Mammary epithelial cell (primary cell): ENCODE measurements at regions of chr4 and their contacts with region 1.

Region 1: GRCh38 chr4:144754562-144755410 is 108.8 kb downstream of the HHIP start:
- DNase-seq: peak; percentile 43
- H3K4me3 ChIP-seq: no peak overlapping the region
- H3K27ac ChIP-seq: no peak overlapping the region
- H3K4me1 ChIP-seq: peaks cover 5% of the 10 kb centered on the region
- H3K27me3 ChIP-seq: no peaks in the 10 kb centered on the region
- CTCF ChIP-seq: peak; percentile 78 to 81

Region 2: DNA sequence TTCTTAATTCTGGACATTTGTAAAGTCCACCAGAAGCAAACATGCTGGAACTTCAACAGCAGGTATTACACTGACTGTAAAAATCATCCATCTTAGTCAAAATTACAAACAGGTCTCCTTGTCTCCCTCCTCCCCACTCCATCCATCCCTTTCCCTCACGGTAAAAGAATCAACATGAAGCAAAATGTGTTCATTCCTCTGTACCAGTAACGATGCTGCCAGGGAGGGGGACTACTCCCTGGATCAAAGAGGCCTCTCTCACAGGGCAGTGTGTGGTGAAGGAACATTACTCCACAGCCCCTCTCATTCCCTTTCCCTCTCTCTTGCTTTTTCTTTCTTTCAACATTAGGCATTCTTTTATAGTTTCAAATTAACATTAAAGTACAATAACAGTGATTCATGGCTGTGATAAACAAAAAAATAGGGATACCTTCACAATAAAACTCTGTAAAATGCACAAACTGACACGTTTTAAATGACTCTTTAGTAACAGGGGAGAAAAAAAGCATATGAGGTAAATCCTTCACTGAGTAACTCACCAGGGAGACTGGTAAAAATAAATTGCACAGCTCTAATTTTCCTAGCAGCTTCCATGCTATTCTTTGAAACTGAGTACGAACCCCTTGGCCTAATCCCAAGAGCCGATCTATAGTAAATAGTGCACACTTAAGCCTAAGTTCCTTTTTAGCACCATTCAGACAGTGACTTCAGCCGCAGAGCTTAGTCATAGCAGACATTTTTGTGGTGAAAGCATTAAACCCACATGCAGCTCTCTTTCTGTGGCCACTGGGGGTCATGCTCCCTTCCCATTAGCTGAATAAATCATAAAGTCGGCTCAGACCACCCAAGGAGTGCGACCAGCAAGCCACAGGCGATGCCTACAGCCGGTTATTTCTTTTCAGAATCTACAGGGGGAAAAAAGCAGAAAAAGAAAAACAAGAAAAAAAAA is 398.7 kb before region 1 on chr4:
- CTCF ChIA-PET with region 1: no interaction called
- dilution Hi-C with region 1: no loop called
- in situ Hi-C with region 1: no loop called
- intact Hi-C with region 1: loop called (anchors 10 kb)
- DNase-seq: peak; percentile 86
- H3K4me3 ChIP-seq: no peak overlapping the region
- H3K27ac ChIP-seq: no peak overlapping the region
- H3K4me1 ChIP-seq: peaks cover 30% of the 10 kb centered on the region
- H3K27me3 ChIP-seq: no peaks in the 10 kb centered on the region
- CTCF ChIP-seq: peak; percentile 27 to 46

Region 3: DNA sequence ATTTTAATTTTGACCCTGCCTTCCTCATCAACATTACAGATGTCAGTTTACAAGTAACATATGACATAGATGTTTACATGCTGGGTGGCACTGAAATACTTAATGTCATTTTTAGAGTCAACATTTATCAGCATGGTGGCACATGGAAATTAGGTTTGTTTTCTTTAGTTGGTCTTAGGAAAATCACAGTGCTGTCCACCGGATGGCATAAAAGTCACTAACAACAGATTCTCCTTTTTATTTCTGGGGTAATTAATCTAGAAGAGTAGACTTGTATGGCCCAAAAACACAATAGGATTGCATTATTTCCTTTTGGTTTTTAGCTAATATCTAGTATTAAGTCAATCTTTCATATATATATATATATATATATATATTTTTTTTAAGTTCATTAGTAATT is 197.4 kb before region 1 on chr4:
- CTCF ChIA-PET with region 1: no interaction called
- dilution Hi-C with region 1: no loop called
- in situ Hi-C with region 1: no loop called
- intact Hi-C with region 1: loop called (anchors 1 kb)
- DNase-seq: no peak
- H3K4me3 ChIP-seq: no peak overlapping the region
- H3K27ac ChIP-seq: no peak overlapping the region
- H3K4me1 ChIP-seq: no peaks in the 10 kb centered on the region
- H3K27me3 ChIP-seq: no peaks in the 10 kb centered on the region
- CTCF ChIP-seq: peak in 1 of 2 donors; percentile 16

Region 4: GRCh38 chr4:144611846-144612245 is 142.9 kb before region 1 on chr4:
- CTCF ChIA-PET with region 1: no interaction called
- dilution Hi-C with region 1: no loop called
- in situ Hi-C with region 1: no loop called
- intact Hi-C with region 1: loop called (anchors 1 kb)
- DNase-seq: peak; percentile 22
- H3K4me3 ChIP-seq: no peak overlapping the region
- H3K27ac ChIP-seq: no peak overlapping the region
- H3K4me1 ChIP-seq: no peaks in the 10 kb centered on the region
- H3K27me3 ChIP-seq: no peaks in the 10 kb centered on the region
- CTCF ChIP-seq: peak; percentile 62 to 78

Region 5: DNA sequence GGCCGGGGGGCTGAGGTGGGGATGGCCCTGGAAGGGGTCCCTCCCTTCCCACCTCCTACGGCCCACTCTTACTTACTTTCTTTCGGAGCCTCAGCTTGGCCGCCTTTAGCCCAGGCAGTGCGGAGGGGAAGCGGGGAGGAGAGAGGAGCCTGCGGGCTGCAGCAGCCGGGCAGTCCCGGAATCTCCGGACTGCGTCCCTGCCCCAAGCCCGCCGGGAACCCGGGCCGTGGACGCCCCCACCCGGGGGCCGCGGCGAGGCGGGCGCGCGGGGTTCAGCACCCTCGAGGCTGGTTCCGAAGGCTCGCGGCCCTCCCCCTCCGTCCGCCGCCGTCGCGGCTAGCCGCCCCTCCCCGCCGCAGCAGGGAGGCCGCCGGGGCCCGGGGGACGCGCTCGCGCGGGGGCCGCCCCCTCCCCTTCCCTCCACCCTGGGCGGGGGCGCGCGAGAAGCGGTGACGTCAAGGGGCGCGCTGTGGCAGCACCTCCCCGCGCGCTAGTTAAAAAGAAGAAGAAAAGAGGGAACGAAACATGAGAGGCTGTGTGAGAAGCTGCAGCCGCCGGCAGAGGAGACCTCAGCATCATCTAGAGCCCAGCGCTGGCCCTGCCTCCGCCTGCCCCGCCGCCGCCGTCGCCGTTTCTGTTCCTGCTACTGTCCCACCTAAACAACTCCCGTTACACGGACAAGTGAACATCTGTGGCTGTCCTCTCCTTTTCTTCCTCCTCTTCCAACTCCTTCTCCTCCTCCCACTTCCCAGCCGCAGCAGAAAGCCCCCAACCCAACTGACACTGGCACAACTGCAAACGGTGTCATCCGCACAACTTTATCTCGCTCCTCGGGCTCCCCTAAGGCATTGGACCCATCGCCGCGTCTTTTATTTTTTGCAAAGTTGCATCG is 108.9 kb before region 1 on chr4 and contains the start of gene HHIP:
- CTCF ChIA-PET with region 1: no interaction called
- dilution Hi-C with region 1: no loop called
- in situ Hi-C with region 1: no loop called
- intact Hi-C with region 1: loop called (anchors 10 kb)
- DNase-seq: peak; percentile 16
- H3K4me3 ChIP-seq: peak within 1 kb of the TSS; percentile 56 to 65 (median 58)
- H3K27ac ChIP-seq: no peak within 1 kb of the TSS
- H3K4me1 ChIP-seq: peaks cover 5% of the 10 kb centered on the region
- H3K27me3 ChIP-seq: no peaks in the 10 kb centered on the region
- CTCF ChIP-seq: no peak
- total RNA-seq, gene HHIP: 0.17 to 3.4 TPM

Region 6: DNA sequence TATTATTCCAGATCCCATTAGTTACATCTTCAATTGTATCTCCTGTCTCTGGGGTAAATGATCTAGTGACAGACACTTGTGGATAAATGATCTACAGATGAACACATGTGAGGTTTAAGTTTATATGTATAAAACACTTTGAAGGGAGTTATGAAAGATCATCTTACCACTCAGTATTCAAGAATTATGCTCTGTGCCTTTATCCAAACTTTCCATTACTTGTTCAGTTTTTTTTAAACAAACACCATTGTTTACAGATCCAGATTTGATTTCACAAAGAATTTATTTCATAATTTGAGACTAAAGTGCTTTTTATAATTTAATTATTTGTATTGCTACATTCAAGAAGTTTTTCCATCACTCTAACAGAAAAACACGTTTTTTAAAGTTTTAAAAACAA is 33.7 kb after region 1 on chr4:
- CTCF ChIA-PET with region 1: no interaction called
- dilution Hi-C with region 1: no loop called
- in situ Hi-C with region 1: no loop called
- intact Hi-C with region 1: no loop called
- DNase-seq: no peak
- H3K4me3 ChIP-seq: no peak overlapping the region
- H3K27ac ChIP-seq: no peak overlapping the region
- H3K4me1 ChIP-seq: no peaks in the 10 kb centered on the region
- H3K27me3 ChIP-seq: no peaks in the 10 kb centered on the region
- CTCF ChIP-seq: no peak

Region 7: GRCh38 chr4:145061318-145061920 is 306.6 kb after region 1 on chr4:
- CTCF ChIA-PET with region 1: no interaction called
- dilution Hi-C with region 1: no loop called
- in situ Hi-C with region 1: no loop called
- intact Hi-C with region 1: loop called (anchors 2 kb)
- DNase-seq: peak; percentile 35
- H3K4me3 ChIP-seq: no peak overlapping the region
- H3K27ac ChIP-seq: no peak overlapping the region
- H3K4me1 ChIP-seq: peaks cover 6% of the 10 kb centered on the region
- H3K27me3 ChIP-seq: no peaks in the 10 kb centered on the region
- CTCF ChIP-seq: peak; percentile 32 to 42